MCF 10A (cell line): ENCODE measurements at regions of chr6 and their contacts with region 1.

Region 1: GRCh38 chr6:136792410-136793262 is at the start of gene MAP3K5:
- DNase-seq: peak; percentile 93
- H3K4me3 Mint-ChIP-seq: peak within 1 kb of the TSS; percentile 92
- H3K27ac Mint-ChIP-seq: peak within 1 kb of the TSS; percentile 98
- H3K4me1 Mint-ChIP-seq: peaks cover 17% of the 10 kb centered on the region
- H3K27me3 Mint-ChIP-seq: no peaks in the 10 kb centered on the region
- CTCF ChIP-seq: peak; percentile 65
- total RNA-seq, gene MAP3K5: 7.6 and 8.4 TPM in 2 replicates

Region 2: DNA sequence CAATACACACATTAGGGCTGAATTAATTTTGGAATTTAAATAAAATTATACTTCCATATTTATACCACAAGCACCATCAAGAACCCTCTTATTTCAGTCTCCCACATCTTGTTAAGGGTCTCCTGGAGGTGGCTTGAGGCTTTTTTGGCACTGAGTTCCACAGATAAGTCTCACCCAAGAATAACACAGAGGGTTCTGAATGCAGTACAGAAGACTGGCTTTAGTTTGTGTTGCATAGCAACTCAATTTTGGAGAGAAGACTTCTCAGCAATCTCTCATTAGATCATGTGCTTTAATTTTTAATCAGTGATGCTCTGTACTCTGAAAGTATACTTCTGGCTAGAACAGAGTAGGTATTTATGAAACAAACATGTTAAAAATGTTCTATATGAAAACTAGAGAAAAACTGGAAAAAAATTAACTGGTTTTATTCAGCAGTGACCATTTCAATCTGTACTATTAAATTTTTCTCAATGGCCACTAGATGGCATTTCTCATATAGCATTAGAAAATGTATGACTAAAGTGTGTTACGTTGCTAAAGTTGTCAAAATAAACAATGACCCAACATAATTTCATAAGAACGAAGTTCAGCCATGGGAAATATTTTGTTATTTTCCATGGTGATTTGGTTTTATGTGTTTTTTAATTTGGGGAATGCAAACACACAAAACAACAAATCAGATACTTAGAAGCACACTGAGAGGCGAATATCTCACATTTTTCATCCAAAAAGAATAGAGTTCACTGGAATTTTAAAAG is 209.7 kb before region 1 on chr6:
- CTCF ChIA-PET with region 1: interaction called, 15 read pairs
- POLR2A ChIA-PET with region 1: interaction called, 30 read pairs
- intact Hi-C with region 1: loop called (anchors 1 kb)
- DNase-seq: peak; percentile 76
- H3K4me3 Mint-ChIP-seq: no peak overlapping the region
- H3K27ac Mint-ChIP-seq: peak overlapping the region; percentile 96
- H3K4me1 Mint-ChIP-seq: peaks cover 23% of the 10 kb centered on the region
- H3K27me3 Mint-ChIP-seq: no peaks in the 10 kb centered on the region
- CTCF ChIP-seq: peak; percentile 47

Region 3: GRCh38 chr6:136628996-136629395 is 163.6 kb before region 1 on chr6:
- CTCF ChIA-PET with region 1: interaction called, 10 read pairs
- POLR2A ChIA-PET with region 1: no interaction called
- intact Hi-C with region 1: no loop called
- DNase-seq: peak; percentile 46
- H3K4me3 Mint-ChIP-seq: no peak overlapping the region
- H3K27ac Mint-ChIP-seq: peak overlapping the region; percentile 39
- H3K4me1 Mint-ChIP-seq: no peaks in the 10 kb centered on the region
- H3K27me3 Mint-ChIP-seq: no peaks in the 10 kb centered on the region
- CTCF ChIP-seq: no peak

Region 4: GRCh38 chr6:136669299-136669699 is 123.3 kb before region 1 on chr6:
- CTCF ChIA-PET with region 1: interaction called, 23 read pairs
- POLR2A ChIA-PET with region 1: interaction called, 51 read pairs
- intact Hi-C with region 1: no loop called
- DNase-seq: peak; percentile 92
- H3K4me3 Mint-ChIP-seq: peak overlapping the region; percentile 5
- H3K27ac Mint-ChIP-seq: peak overlapping the region; percentile 47
- H3K4me1 Mint-ChIP-seq: peaks cover 16% of the 10 kb centered on the region
- H3K27me3 Mint-ChIP-seq: no peaks in the 10 kb centered on the region
- CTCF ChIP-seq: no peak

Region 5: DNA sequence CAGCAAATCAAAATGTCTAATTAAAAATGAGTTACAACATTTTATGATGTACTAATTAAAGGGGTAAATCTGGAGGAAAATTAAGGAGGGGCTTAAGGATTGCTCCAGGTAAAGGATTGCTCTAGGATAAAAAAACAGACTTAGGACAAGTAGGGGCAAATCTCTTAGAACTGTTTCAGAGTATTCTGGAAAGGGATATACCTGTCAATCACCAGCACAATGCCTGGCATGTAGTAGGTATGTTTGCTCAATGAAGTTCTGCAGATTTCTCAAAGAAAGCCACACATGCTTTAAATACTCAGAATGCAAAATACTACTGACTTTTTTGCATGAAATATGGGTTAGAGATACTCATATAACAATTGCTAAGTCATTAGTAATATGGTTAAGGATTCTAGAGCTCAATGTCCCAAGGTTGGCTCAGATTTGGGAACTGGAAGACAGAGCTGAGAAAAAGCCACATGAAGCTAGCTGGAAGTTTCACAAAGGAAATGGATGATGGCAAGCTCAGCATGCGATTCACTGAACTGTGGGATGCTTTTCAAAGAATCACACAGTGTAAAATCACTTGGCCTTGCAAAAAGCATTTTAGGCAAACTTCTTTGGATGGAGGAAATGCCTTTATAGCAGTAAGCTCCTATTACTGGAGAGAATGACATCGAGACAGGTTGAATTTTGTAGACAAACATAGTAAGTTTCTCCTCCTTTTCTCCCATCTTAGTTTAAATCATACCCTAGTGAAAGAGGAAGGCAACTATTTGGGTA is 73.2 kb before region 1 on chr6:
- CTCF ChIA-PET with region 1: interaction called, 20 read pairs
- POLR2A ChIA-PET with region 1: interaction called, 12 read pairs
- intact Hi-C with region 1: no loop called
- DNase-seq: no peak
- H3K4me3 Mint-ChIP-seq: no peak overlapping the region
- H3K27ac Mint-ChIP-seq: peak overlapping the region; percentile 61
- H3K4me1 Mint-ChIP-seq: peaks cover 22% of the 10 kb centered on the region
- H3K27me3 Mint-ChIP-seq: no peaks in the 10 kb centered on the region
- CTCF ChIP-seq: no peak

Region 6: GRCh38 chr6:137013738-137014602 is 221.3 kb after region 1 on chr6:
- CTCF ChIA-PET with region 1: interaction called, 9 read pairs
- POLR2A ChIA-PET with region 1: interaction called, 17 read pairs
- intact Hi-C with region 1: no loop called
- DNase-seq: peak; percentile 81
- H3K4me3 Mint-ChIP-seq: no peak overlapping the region
- H3K27ac Mint-ChIP-seq: peak overlapping the region; percentile 17
- H3K4me1 Mint-ChIP-seq: peaks cover 14% of the 10 kb centered on the region
- H3K27me3 Mint-ChIP-seq: no peaks in the 10 kb centered on the region
- CTCF ChIP-seq: peak; percentile 67